Sigmoid colon (tissue), 7 donors: ENCODE measurements at regions of chr18 and their contacts with region 1.

Region 1: GRCh38 chr18:11995445-11996189 is 14.3 kb downstream of the IMPA2 start:
- DNase-seq: peak; percentile 91
- H3K4me3 ChIP-seq: no peak overlapping the region
- H3K27ac ChIP-seq: peak overlapping the region; percentile 36 to 70 (median 48)
- H3K4me1 ChIP-seq: peaks cover 0 to 23% (median 12%) of the 10 kb centered on the region in 4 donors
- H3K27me3 ChIP-seq: no peaks in the 10 kb centered on the region
- CTCF ChIP-seq: peak; percentile 75 to 80 (median 76)
- EP300 ChIP-seq: no peak
- POLR2A ChIP-seq: no peak

Region 2: GRCh38 chr18:11937874-11938478 is 57.6 kb before region 1 on chr18:
- intact Hi-C with region 1: loop called (anchors 1 kb)
- DNase-seq: peak; percentile 84
- H3K4me3 ChIP-seq: no peak overlapping the region
- H3K27ac ChIP-seq: peak overlapping the region in 1 of 4 donors; percentile 45
- H3K4me1 ChIP-seq: no peaks in the 10 kb centered on the region
- H3K27me3 ChIP-seq: no peaks in the 10 kb centered on the region
- CTCF ChIP-seq: peak; percentile 58 to 82 (median 71)
- EP300 ChIP-seq: no peak
- POLR2A ChIP-seq: no peak